ENCODE measurements at regions of chr16 and their contacts with region 1.

Region 1: DNA sequence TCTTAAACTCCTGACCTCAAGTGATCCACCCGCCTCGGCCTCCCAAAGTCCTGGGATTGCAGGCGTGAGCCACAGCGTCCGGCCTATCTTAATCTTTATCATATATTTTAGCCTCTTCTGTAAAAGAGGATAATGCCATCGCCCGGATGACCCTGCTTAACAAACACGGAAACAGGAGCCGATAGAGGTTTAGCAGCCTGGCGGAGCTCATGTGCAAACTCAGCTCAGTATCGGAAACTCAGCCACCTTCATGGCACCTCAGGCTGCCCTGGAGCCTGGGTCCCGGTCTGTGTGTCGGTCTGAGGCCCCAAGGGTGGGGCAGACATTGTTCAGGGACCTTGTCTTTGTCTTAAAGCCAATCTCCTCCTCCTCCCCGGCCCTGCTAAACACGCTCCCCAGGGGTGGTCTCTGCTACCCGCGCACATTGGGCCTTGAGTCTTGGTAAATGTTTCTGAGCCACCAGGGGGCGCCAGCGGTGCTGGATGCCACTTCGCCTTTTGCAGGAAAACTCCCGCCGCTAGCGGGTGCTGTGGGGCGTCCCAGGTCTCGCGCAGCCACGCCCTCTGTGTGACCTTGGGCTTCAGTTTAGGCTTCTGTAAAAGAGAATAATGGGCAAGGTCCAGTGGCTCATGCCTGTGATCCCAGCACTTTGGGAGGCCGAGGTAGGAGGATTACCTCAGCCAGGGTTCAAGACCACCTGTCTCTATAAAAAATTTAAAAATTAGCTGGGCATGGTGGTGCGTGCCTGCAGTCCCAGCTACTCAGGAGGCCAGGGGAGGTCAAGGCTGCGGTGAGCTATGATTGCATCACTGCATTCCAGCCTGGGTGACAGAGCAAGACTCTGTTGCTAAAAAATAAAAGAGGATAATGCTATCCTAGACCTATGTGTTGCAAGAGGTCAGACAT is 2.7 kb downstream of the CETP start:
- DNase-seq: peak; percentile 83 to 89 (median 87)
- H3K4me3 ChIP-seq: no peak overlapping the region
- H3K4me3 Mint-ChIP-seq: peak overlapping the region in 1 of 2 donors; percentile 26
- H3K27ac ChIP-seq: peak overlapping the region; percentile 65
- H3K27ac Mint-ChIP-seq: peak overlapping the region; percentile 81 to 95 (median 89)
- H3K4me1 ChIP-seq: peaks cover 61 to 66% of the 10 kb centered on the region in 2 donors
- H3K4me1 Mint-ChIP-seq: peaks cover 61% of the 10 kb centered on the region
- H3K27me3 ChIP-seq: no peaks in the 10 kb centered on the region
- H3K27me3 Mint-ChIP-seq: peaks cover 0 to 5% (median 0%) of the 10 kb centered on the region in 3 donors
- CTCF ChIP-seq: peak; percentile 98

Region 2: DNA sequence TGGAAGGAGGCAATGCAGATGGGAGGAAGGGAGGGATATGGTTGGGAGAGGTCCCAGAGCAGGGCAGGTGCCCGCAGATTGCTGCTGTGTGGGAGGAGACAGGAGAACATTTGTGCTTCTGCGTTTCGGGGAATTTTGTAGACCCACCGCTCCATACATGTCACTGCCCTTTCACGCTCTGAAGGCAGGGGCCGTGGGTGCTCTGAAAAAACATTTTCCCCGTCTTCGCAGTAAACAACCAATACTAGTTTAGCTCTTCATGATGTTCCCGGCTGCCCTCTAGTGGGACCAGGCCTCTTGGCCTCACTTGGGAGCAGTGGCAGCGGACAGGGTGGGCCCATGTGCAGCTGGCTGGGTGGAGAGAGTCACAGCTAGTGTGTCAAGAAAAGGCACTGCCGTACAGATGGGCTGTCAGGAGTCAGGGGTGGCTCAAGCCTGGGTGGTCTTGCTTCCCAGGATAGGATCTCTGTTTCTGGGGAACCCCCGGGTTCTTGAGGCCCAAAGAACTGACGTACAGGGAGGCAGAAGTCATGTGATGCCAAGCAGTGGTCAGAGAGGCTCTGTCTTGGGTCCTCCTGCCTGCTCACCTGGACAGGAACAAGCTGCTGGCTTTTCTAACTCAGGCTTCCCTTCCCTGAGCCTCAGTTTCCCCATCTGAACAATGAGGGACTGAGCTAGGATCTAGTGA is 81.3 kb after region 1 on chr16:
- intact Hi-C with region 1: loop called in 1 of 2 experiments (anchors 5 kb)
- DNase-seq: peak in 2 of 3 donors; percentile 32 to 39
- H3K4me3 ChIP-seq: peak overlapping the region in 1 of 3 experiments; percentile 16
- H3K4me3 Mint-ChIP-seq: no peak overlapping the region
- H3K27ac ChIP-seq: peak overlapping the region; percentile 15 to 68
- H3K27ac Mint-ChIP-seq: peak overlapping the region; percentile 53 to 89 (median 81)
- H3K4me1 ChIP-seq: peaks cover 48 to 50% of the 10 kb centered on the region in 2 donors
- H3K4me1 Mint-ChIP-seq: peaks cover 50% of the 10 kb centered on the region
- H3K27me3 ChIP-seq: no peaks in the 10 kb centered on the region
- H3K27me3 Mint-ChIP-seq: peaks cover 0 to 6% (median 2%) of the 10 kb centered on the region in 3 donors
- CTCF ChIP-seq: peak; percentile 38

Measured in CD14-positive monocyte (primary cell).